Ovary (tissue), 10 donors: ENCODE measurements at regions of chr2 and their contacts with region 1.

Region 1: DNA sequence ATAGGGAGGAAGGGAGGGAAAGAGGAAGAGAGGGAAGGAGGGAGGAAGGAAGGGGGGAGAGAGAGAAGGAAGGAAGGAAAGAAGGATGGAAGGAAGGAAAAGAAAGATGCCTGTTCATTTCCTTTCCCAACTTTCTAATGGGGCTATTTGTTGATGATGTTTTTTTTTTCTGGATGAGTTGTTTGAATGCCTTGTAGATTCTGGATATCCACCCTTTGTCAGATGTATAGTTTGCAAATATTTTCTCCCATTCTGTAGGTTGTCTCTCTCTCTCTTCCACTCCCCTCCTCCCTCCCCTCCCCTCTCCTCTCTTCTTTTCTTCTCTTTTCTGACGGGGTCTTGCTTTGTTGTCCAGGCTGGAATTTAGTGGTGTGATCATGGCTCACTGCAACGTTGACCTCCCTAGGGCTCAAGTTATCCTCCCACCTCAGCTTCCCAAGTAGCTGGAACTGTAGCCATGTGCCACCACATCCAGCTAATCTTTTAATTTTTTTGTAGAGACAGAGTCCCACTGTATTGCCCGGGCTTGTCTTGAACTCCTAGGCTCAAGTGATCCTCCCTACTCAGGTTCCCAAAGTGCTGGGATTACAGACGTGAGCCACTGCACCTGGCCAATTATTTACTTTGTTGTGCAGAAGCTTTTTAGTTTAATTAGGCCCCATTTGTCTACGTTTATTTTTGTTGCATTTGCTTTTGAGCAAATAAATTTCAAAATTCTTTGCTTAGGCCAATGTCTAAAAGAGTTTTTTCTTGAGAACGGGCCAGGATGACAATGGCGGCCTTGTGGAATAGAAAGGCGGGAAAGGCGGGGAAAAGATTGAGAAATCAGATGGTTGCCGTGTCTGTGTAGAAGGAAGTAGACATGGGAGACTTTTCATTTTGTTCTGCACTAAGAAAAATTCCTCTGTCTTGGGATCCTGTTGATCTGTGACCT is 57.3 kb upstream of the FAM117B start:
- DNase-seq: no peak
- H3K4me3 ChIP-seq: no peak overlapping the region
- H3K27ac ChIP-seq: no peak overlapping the region
- H3K4me1 ChIP-seq: no peaks in the 10 kb centered on the region
- H3K27me3 ChIP-seq: no peaks in the 10 kb centered on the region
- CTCF ChIP-seq: no peak
- EP300 ChIP-seq: no peak
- POLR2A ChIP-seq: no peak

Region 2: DNA sequence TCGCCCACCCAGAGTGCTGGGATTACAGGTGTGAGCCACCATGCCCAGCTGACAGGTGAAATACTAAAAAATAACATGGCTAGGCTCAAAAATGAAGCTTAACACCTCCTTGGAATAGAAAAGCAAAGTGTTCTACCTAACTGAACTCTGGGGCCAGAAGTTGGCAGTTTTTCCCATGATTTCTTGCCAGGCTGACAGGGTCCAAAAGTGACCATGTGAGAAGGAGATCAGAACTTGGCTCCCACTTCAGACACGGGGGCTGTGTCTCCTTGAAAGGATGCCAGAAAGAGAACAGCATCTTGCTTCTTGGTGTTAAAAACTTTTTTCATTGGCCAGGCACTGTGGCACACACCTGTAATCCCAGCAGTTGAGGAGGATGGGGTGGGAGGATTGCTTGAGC is 154.4 kb before region 1 on chr2:
- intact Hi-C with region 1: no loop called
- DNase-seq: peak in 4 of 5 donors; percentile 31 to 57 (median 48)
- H3K4me3 ChIP-seq: no peak overlapping the region
- H3K27ac ChIP-seq: no peak overlapping the region
- H3K4me1 ChIP-seq: peaks cover 9% of the 10 kb centered on the region
- H3K27me3 ChIP-seq: no peaks in the 10 kb centered on the region
- CTCF ChIP-seq: no peak
- EP300 ChIP-seq: no peak
- POLR2A ChIP-seq: no peak

Region 3: DNA sequence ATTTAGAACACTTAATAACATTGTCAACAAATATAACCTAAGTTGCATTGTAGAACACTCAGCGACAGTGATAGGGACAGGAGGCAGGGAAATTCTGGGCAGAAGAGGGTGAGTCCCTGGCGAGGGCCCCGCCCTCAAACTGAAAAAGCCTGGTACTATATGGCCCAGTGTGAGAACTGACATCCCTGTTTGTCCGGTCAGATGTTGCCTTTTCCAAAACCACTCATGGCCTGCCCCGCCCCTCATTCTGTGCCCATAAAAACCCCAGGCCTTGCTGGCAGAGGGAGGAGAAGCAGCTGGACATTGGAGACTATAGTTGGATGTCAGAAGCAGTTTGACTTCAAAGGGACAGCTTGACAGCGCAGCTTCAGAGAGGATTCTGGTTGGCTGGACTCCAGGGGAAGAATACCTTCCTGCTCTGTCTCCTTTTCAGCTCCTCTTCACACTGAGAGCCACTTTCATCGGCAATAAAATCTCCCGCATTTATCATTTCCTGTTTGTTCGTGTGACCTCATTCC is 104.2 kb after region 1 on chr2:
- intact Hi-C with region 1: no loop called
- DNase-seq: no peak
- H3K4me3 ChIP-seq: no peak overlapping the region
- H3K27ac ChIP-seq: no peak overlapping the region
- H3K4me1 ChIP-seq: no peaks in the 10 kb centered on the region
- H3K27me3 ChIP-seq: no peaks in the 10 kb centered on the region
- CTCF ChIP-seq: no peak
- EP300 ChIP-seq: no peak
- POLR2A ChIP-seq: no peak

Region 4: GRCh38 chr2:203453858-203454451 is 876.4 kb after region 1 on chr2:
- intact Hi-C with region 1: loop called in 1 of 4 experiments (anchors 10 kb)
- DNase-seq: peak in 1 of 5 donors; percentile 30
- H3K4me3 ChIP-seq: no peak overlapping the region
- H3K27ac ChIP-seq: no peak overlapping the region
- H3K4me1 ChIP-seq: no peaks in the 10 kb centered on the region
- H3K27me3 ChIP-seq: no peaks in the 10 kb centered on the region
- CTCF ChIP-seq: peak; percentile 56 to 73 (median 57)
- EP300 ChIP-seq: no peak
- POLR2A ChIP-seq: no peak

Region 5: GRCh38 chr2:204325468-204325867 is 1748.0 kb after region 1 on chr2:
- intact Hi-C with region 1: no loop called
- DNase-seq: peak in 4 of 5 donors; percentile 52 to 72 (median 58)
- H3K4me3 ChIP-seq: no peak overlapping the region
- H3K27ac ChIP-seq: no peak overlapping the region
- H3K4me1 ChIP-seq: no peaks in the 10 kb centered on the region
- H3K27me3 ChIP-seq: no peaks in the 10 kb centered on the region
- CTCF ChIP-seq: peak; percentile 65 to 83 (median 73)
- EP300 ChIP-seq: no peak
- POLR2A ChIP-seq: no peak